CD4-positive, alpha-beta T cell (primary cell): ENCODE measurements at regions of chr4 and their contacts with region 1.

Region 1: DNA sequence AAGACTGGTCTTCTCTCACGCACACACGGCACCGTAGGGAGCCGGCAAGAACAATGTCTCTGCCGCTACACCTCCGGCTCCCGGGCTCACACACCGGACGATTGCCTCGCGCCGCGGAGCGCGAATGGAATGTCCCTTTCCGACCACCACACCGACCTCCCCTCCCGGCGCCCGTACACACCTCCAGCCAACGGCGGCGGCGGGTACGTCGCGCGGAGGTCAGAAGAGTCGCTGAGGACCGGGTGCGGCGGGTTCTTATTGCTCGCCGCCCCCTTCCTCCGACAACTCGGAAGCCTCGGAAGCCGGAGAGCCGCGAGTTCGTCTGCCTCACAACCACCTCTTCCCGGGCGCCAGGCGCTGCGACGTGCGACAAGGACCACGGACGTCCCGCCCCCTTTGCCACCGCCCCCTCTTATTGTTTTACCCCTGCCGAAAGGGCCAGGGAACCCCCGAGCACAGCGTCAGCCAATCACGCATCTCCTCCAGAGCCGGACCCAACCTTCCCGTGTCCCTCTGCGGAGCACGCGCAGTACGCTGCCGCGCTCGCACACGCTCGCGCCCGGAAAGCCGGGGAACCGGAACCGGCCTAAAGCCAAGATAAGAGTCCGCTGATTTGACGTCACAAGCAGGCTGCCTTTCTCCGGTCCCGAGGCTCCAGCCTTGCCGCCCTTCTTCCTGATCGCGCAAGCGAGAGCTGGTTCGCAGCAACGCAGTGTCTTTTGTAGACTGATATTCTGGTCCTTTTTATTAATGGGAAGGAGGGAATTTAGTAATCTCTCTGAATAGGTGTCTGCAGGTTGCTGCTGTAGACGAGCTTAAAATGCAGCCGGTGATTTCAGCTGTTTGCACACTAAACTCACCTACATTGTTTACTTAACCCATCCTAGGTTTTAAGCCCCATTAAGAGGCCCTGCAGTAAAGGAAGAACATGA is at the start of gene G3BP2:
- DNase-seq: peak; percentile 95 to 100 (median 97)
- ATAC-seq: peak; percentile 91
- H3K4me3 ChIP-seq: peak within 1 kb of the TSS; percentile 83
- H3K4me3 Mint-ChIP-seq: peak within 1 kb of the TSS; percentile 97
- H3K27ac ChIP-seq: peak within 1 kb of the TSS; percentile 97 to 98
- H3K27ac Mint-ChIP-seq: peak within 1 kb of the TSS; percentile 99
- H3K4me1 ChIP-seq: peaks cover 26% of the 10 kb centered on the region
- H3K4me1 Mint-ChIP-seq: peaks cover 57% of the 10 kb centered on the region
- H3K27me3 ChIP-seq: no peaks in the 10 kb centered on the region
- H3K27me3 Mint-ChIP-seq: no peaks in the 10 kb centered on the region
- CTCF ChIP-seq: no peak
- total RNA-seq, gene G3BP2: 319 to 322 TPM

Region 2: DNA sequence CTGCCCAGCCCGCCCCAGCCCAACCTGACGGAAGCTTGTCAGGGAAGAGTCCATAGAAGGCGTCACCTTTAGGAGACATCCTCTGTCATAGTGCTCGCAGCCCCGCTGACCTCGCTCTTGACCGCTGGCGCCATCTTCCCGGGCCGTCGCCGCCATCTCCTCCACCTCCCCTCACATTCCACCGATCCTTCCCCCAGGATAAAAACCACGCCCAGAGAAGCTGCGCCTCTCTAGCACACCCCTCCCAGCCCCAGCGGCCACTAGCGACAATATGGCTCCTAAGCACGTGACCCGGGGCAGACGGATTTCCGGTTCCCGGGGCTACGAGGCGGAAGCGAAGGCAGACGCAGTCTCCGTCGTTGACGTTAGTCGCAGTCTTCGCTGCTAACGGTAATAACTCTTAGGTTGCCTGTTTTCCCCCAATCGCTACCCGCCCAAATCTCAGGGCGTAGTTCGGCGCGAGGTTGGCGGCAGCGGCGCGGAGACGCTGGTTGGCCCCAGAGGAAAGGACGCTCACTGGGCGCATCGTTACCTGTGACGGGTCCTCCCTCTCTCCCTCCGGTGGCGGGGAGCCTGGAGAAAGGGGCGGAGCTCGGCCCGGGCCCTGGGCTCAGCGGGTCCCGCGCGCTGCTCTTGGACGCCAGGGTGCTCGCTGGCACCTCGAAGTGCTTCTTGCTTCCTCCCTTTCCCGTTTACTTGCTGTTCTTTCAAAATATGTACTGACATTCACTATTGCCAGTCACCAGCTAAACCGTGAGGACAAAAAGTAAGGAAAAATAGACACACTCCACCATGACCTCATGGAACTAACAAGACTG is 159.0 kb before region 1 on chr4 and contains the starts of genes RCHY1 and THAP6:
- CTCF ChIA-PET with region 1: no interaction called
- POLR2A ChIA-PET with region 1: interaction called, 36 read pairs
- intact Hi-C with region 1: loop called (anchors 2 to 10 kb)
- DNase-seq: peak; percentile 84 to 97 (median 88)
- ATAC-seq: peak; percentile 86
- H3K4me3 ChIP-seq: peak within 1 kb of the TSS; percentile 77
- H3K4me3 Mint-ChIP-seq: no peak within 1 kb of the TSS
- H3K27ac ChIP-seq: peak within 1 kb of the TSS; percentile 94 to 97
- H3K27ac Mint-ChIP-seq: no peak within 1 kb of the TSS
- H3K4me1 ChIP-seq: peaks cover 21% of the 10 kb centered on the region
- H3K4me1 Mint-ChIP-seq: peaks cover 40% of the 10 kb centered on the region
- H3K27me3 ChIP-seq: no peaks in the 10 kb centered on the region
- H3K27me3 Mint-ChIP-seq: no peaks in the 10 kb centered on the region
- CTCF ChIP-seq: no peak
- total RNA-seq, gene RCHY1: 33.6 to 37.0 TPM
- total RNA-seq, gene THAP6: 19.1 to 22.8 TPM

Region 3: GRCh38 chr4:75644095-75644494 is 29.2 kb before region 1 on chr4:
- CTCF ChIA-PET with region 1: no interaction called
- POLR2A ChIA-PET with region 1: interaction called, 11 read pairs
- intact Hi-C with region 1: no loop called
- DNase-seq: no peak
- ATAC-seq: no peak
- H3K4me3 ChIP-seq: no peak overlapping the region
- H3K4me3 Mint-ChIP-seq: no peak overlapping the region
- H3K27ac ChIP-seq: no peak overlapping the region
- H3K27ac Mint-ChIP-seq: peak overlapping the region; percentile 19
- H3K4me1 ChIP-seq: no peaks in the 10 kb centered on the region
- H3K4me1 Mint-ChIP-seq: peaks cover 12% of the 10 kb centered on the region
- H3K27me3 ChIP-seq: no peaks in the 10 kb centered on the region
- H3K27me3 Mint-ChIP-seq: no peaks in the 10 kb centered on the region
- CTCF ChIP-seq: no peak

Region 4: GRCh38 chr4:75686346-75686745 is 13.1 kb after region 1 on chr4:
- CTCF ChIA-PET with region 1: no interaction called
- POLR2A ChIA-PET with region 1: interaction called, 28 read pairs
- intact Hi-C with region 1: no loop called
- DNase-seq: peak in 5 of 14 experiments; percentile 14 to 64 (median 53)
- ATAC-seq: peak; percentile 75
- H3K4me3 ChIP-seq: no peak overlapping the region
- H3K4me3 Mint-ChIP-seq: no peak overlapping the region
- H3K27ac ChIP-seq: peak overlapping the region in 1 of 2 donors; percentile 9
- H3K27ac Mint-ChIP-seq: peak overlapping the region; percentile 43
- H3K4me1 ChIP-seq: peaks cover 16% of the 10 kb centered on the region
- H3K4me1 Mint-ChIP-seq: peaks cover 40% of the 10 kb centered on the region
- H3K27me3 ChIP-seq: no peaks in the 10 kb centered on the region
- H3K27me3 Mint-ChIP-seq: no peaks in the 10 kb centered on the region
- CTCF ChIP-seq: no peak

Region 5: GRCh38 chr4:75940692-75941253 is 267.5 kb after region 1 on chr4 and contains the start of gene NAAA:
- CTCF ChIA-PET with region 1: interaction called, 4 read pairs
- POLR2A ChIA-PET with region 1: interaction called, 13 read pairs
- intact Hi-C with region 1: no loop called
- DNase-seq: peak; percentile 51 to 93 (median 72)
- ATAC-seq: peak; percentile 83
- H3K4me3 ChIP-seq: peak within 1 kb of the TSS; percentile 86
- H3K4me3 Mint-ChIP-seq: peak within 1 kb of the TSS; percentile 100
- H3K27ac ChIP-seq: peak within 1 kb of the TSS; percentile 79 to 86
- H3K27ac Mint-ChIP-seq: peak within 1 kb of the TSS; percentile 95
- H3K4me1 ChIP-seq: peaks cover 20% of the 10 kb centered on the region
- H3K4me1 Mint-ChIP-seq: peaks cover 27% of the 10 kb centered on the region
- H3K27me3 ChIP-seq: no peaks in the 10 kb centered on the region
- H3K27me3 Mint-ChIP-seq: no peaks in the 10 kb centered on the region
- CTCF ChIP-seq: no peak
- total RNA-seq, gene NAAA: 32.6 to 33.3 TPM

Region 6: GRCh38 chr4:76148142-76148865 is 475.0 kb after region 1 on chr4 and contains the start of gene NUP54:
- CTCF ChIA-PET with region 1: no interaction called
- POLR2A ChIA-PET with region 1: no interaction called
- intact Hi-C with region 1: loop called in 1 of 2 experiments (anchors 5 kb)
- DNase-seq: peak; percentile 90 to 97 (median 93)
- ATAC-seq: peak; percentile 97
- H3K4me3 ChIP-seq: peak within 1 kb of the TSS; percentile 95
- H3K4me3 Mint-ChIP-seq: peak within 1 kb of the TSS; percentile 99
- H3K27ac ChIP-seq: peak within 1 kb of the TSS; percentile 80 to 90
- H3K27ac Mint-ChIP-seq: peak within 1 kb of the TSS; percentile 92
- H3K4me1 ChIP-seq: peaks cover 15% of the 10 kb centered on the region
- H3K4me1 Mint-ChIP-seq: peaks cover 38% of the 10 kb centered on the region
- H3K27me3 ChIP-seq: no peaks in the 10 kb centered on the region
- H3K27me3 Mint-ChIP-seq: no peaks in the 10 kb centered on the region
- CTCF ChIP-seq: no peak
- total RNA-seq, gene NUP54: 94.1 to 108 TPM